Activated CD4-positive, alpha-beta T cell treated with anti-CD3 and anti-CD28 coated beads, Interleukin-2, amount 10 ng/mL, durations not matched to agents 24 days and 14 days (primary cell): ENCODE measurements at regions of chr17 and their contacts with region 1.

Region 1: GRCh38 chr17:5111402-5112204 is at the start of gene ZNF232:
- DNase-seq: peak; percentile 98
- H3K4me3 Mint-ChIP-seq: peak within 1 kb of the TSS; percentile 85
- H3K27ac Mint-ChIP-seq: peak within 1 kb of the TSS; percentile 63
- H3K4me1 Mint-ChIP-seq: peaks cover 15% of the 10 kb centered on the region
- H3K27me3 Mint-ChIP-seq: peaks cover 13% of the 10 kb centered on the region
- total RNA-seq, gene ZNF232: 17.4 and 19.8 TPM in 2 replicates

Region 2: DNA sequence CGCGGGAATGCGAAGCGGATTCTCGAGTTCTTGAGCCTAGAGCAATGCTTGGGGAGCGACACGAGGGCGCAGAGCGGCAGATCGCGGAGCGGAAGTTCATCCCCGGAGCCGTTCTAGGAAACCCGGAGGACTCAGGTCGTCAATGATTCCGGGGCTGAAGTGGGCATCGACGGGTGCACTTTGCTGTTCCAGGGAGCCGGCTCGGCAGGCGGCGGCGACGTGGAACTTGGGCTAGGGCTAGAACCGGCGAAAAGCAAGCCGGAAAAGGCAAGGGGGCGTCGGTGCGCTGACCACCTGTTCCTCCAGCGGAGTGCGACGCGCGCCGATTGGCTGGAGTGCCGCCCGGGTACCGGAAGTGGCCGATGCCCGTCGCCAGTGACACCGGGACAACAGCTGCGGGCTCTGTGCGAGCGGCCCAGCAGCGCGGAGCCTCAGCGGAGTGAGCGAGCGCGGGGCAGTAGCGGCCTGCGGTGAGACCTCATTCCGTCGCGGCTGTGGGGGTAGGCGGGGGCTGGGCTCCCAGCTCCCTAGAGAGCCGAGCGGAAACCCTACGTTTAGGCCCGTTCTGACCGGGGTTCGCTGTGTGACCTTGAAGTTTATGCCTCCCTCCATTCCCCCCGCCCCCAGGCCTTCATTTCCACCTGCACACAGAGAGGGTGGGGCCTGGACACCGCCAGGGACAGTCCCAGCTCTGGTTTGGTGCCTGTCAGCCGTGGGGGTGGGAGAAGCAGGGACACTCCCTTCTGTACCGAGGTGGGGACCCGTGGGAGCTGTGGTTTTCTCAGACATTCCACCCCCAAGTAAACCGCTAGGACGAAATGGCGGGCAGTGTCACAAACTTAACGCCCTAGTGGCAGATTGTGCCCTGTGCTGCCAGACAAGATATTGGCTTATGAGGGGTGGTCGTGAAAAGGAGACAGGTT is 33.2 kb before region 1 on chr17 and contains the start of gene ZFP3:
- intact Hi-C with region 1: loop called (anchors 2 kb)
- DNase-seq: peak; percentile 93
- H3K4me3 Mint-ChIP-seq: peak within 1 kb of the TSS; percentile 87
- H3K27ac Mint-ChIP-seq: peak within 1 kb of the TSS; percentile 92
- H3K4me1 Mint-ChIP-seq: peaks cover 18% of the 10 kb centered on the region
- H3K27me3 Mint-ChIP-seq: peaks cover 2% of the 10 kb centered on the region
- total RNA-seq, gene ZFP3: 1.9 and 2.6 TPM in 2 replicates

Region 3: GRCh38 chr17:5138616-5139457 is 27.2 kb after region 1 on chr17:
- intact Hi-C with region 1: no loop called
- DNase-seq: peak; percentile 51
- H3K4me3 Mint-ChIP-seq: no peak overlapping the region
- H3K27ac Mint-ChIP-seq: no peak overlapping the region
- H3K4me1 Mint-ChIP-seq: no peaks in the 10 kb centered on the region
- H3K27me3 Mint-ChIP-seq: peaks cover 4% of the 10 kb centered on the region

Region 4: GRCh38 chr17:5191541-5192417 is 80.2 kb after region 1 on chr17 and contains the start of gene ZNF594:
- intact Hi-C with region 1: loop called (anchors 1 kb)
- DNase-seq: peak; percentile 99
- H3K4me3 Mint-ChIP-seq: peak within 1 kb of the TSS; percentile 94
- H3K27ac Mint-ChIP-seq: peak within 1 kb of the TSS; percentile 90
- H3K4me1 Mint-ChIP-seq: peaks cover 21% of the 10 kb centered on the region
- H3K27me3 Mint-ChIP-seq: no peaks in the 10 kb centered on the region
- total RNA-seq, gene ZNF594: 10.1 and 12.1 TPM in 2 replicates